ENCODE measurements at regions of chr2 and their contacts with region 1.

Region 1: GRCh38 chr2:117814417-117815264 is at the start of gene DDX18:
- DNase-seq: peak; percentile 98
- ATAC-seq: peak; percentile 91
- H3K4me3 Mint-ChIP-seq: peak within 1 kb of the TSS; percentile 96
- H3K27ac Mint-ChIP-seq: peak within 1 kb of the TSS; percentile 99
- H3K4me1 Mint-ChIP-seq: peaks cover 41% of the 10 kb centered on the region
- H3K27me3 Mint-ChIP-seq: no peaks in the 10 kb centered on the region
- total RNA-seq, gene DDX18: 161 to 180 TPM

Region 2: GRCh38 chr2:117835990-117836760 is 21.5 kb after region 1 on chr2:
- CTCF ChIA-PET with region 1: interaction called, 14 read pairs
- POLR2A ChIA-PET with region 1: interaction called, 4 read pairs
- intact Hi-C with region 1: no loop called
- DNase-seq: peak; percentile 67
- ATAC-seq: peak; percentile 71
- H3K4me3 Mint-ChIP-seq: no peak overlapping the region
- H3K27ac Mint-ChIP-seq: no peak overlapping the region
- H3K4me1 Mint-ChIP-seq: no peaks in the 10 kb centered on the region
- H3K27me3 Mint-ChIP-seq: no peaks in the 10 kb centered on the region

Region 3: DNA sequence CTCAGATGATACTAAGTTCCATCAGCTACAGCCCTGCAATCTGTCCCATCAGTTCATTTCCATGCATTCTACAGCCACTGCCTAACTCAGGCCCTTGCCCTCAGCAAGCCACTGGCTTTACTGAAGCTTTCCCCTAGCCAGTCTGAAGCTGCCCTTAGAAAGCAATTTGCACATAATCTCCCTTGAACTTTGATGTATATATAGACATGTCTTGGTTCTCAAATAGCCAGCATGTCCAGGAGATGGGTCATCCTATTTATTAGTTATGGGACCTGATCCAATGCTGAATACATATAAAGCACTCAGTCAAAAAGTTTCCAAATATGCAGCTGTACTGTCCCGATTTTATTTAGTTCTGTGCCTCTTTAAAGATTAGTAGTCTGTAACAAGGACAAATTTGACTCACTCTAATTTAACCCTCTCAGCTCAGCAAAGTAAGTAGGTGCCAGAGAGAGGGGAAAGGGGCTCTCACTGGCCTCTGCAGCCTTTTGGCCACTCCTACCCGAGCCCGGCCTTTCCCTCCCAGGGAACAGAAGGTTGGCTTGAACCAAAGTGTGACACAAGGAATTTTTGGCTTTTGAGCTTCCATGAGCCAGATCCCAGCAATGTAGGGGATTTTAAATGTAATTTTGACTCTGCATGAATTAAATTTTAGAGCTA is 128.5 kb after region 1 on chr2:
- CTCF ChIA-PET with region 1: no interaction called
- POLR2A ChIA-PET with region 1: no interaction called
- intact Hi-C with region 1: loop called in 1 of 2 experiments (anchors 10 kb)
- DNase-seq: no peak
- ATAC-seq: no peak
- H3K4me3 Mint-ChIP-seq: no peak overlapping the region
- H3K27ac Mint-ChIP-seq: no peak overlapping the region
- H3K4me1 Mint-ChIP-seq: no peaks in the 10 kb centered on the region
- H3K27me3 Mint-ChIP-seq: no peaks in the 10 kb centered on the region

Region 4: DNA sequence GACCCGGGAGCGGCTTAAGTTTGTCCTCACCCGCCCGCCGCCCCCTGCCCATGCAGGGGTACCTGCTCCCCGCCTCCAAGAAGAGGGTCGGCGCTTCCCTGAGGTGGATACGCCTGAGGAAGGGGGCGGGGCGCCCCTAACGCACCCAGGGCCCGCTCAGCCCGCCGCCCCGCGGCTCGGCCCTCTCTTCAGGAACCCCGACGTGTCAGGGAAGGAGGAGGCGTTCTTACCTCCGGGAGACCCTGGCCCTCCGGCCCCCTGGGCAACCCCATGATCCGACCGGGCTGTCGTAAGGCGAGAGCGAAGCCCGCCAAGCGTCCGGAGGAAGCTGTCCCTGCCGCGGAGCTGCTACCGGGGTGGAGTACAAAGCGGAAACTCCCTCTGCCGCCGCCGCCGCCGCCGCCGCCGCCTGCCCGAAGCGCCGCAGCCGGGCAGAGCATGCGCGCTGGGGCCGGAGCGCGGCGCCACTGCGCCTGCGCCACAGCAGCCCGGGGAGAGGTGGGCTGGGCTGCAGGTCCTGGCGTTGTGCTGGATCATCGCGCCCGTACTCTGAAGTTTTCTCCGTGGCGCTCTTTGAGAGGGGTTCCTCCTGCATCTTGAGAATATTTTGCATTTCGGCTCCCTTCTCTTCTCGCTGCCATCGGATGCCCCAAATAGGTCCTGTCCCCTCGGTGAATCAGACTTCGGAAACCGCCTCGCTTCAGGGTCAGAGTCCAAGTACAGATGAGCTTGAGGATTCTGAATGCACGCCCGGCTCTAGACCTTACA is 199.3 kb after region 1 on chr2 and contains the start of gene CCDC93:
- CTCF ChIA-PET with region 1: interaction called, 6 read pairs
- POLR2A ChIA-PET with region 1: interaction called, 5 read pairs
- intact Hi-C with region 1: loop called (anchors 1 kb)
- DNase-seq: peak; percentile 90
- ATAC-seq: peak; percentile 89
- H3K4me3 Mint-ChIP-seq: peak within 1 kb of the TSS; percentile 85
- H3K27ac Mint-ChIP-seq: peak within 1 kb of the TSS; percentile 87
- H3K4me1 Mint-ChIP-seq: peaks cover 42% of the 10 kb centered on the region
- H3K27me3 Mint-ChIP-seq: no peaks in the 10 kb centered on the region
- total RNA-seq, gene CCDC93: 26.2 to 39.5 TPM

Region 5: GRCh38 chr2:118186110-118186857 is 371.6 kb after region 1 on chr2:
- CTCF ChIA-PET with region 1: no interaction called
- POLR2A ChIA-PET with region 1: no interaction called
- intact Hi-C with region 1: loop called (anchors 1 to 5 kb)
- DNase-seq: peak; percentile 94
- ATAC-seq: peak; percentile 91
- H3K4me3 Mint-ChIP-seq: peak overlapping the region; percentile 87
- H3K27ac Mint-ChIP-seq: peak overlapping the region; percentile 98
- H3K4me1 Mint-ChIP-seq: peaks cover 14% of the 10 kb centered on the region
- H3K27me3 Mint-ChIP-seq: no peaks in the 10 kb centered on the region

Region 6: GRCh38 chr2:118309946-118310680 is 495.5 kb after region 1 on chr2:
- CTCF ChIA-PET with region 1: no interaction called
- POLR2A ChIA-PET with region 1: no interaction called
- intact Hi-C with region 1: loop called (anchors 2 to 5 kb)
- DNase-seq: peak; percentile 83
- ATAC-seq: peak; percentile 86
- H3K4me3 Mint-ChIP-seq: peak overlapping the region; percentile 76
- H3K27ac Mint-ChIP-seq: peak overlapping the region; percentile 93
- H3K4me1 Mint-ChIP-seq: peaks cover 7% of the 10 kb centered on the region
- H3K27me3 Mint-ChIP-seq: no peaks in the 10 kb centered on the region

Measured in activated CD4-positive, alpha-beta T cell treated with anti-CD3 and anti-CD28 coated beads for 36 hours (primary cell).